ENCODE measurements at regions of chr17 and their contacts with region 1.

Region 1: DNA sequence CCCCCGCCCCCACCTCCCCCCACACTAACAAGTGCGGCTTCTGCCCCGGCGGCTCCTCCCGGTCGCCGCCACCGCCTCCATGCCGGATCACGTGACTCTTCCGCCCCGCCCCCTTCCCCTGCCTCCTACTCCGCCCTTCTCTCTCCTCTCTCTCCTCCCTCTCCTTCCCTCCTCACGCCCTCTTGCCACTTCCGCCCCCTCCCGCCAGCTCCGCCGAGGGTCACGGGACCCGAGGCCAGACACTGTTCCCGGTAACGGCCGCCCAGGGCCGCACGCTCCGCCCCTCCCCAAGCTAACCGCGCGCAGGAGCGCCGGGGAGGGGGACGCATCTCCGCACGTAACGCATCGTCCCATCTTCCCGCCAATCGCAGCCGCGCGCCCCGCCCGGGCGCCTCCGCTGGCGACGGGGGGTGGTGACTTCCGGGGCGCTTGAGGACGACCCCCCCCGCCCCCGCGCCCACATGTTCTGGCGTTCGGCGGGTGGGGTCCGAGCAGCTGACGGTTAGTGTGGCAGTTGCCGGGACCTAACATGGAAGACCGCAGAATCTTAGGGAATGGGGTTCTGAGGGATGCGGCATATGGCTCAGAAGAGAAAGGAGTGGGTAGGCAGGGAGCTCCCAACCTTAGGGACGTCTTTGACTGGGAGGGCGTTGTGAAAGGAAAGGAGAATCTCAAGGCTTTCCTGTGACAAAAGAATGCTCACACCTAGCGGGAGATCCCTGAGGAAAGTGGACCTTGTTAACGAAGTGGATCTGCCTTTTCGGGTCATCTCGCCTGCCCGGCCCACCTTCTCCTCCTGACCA is at the start of gene USP32:
- DNase-seq: peak; percentile 99
- H3K4me3 Mint-ChIP-seq: peak within 1 kb of the TSS; percentile 89
- H3K27ac Mint-ChIP-seq: peak within 1 kb of the TSS; percentile 96
- H3K4me1 Mint-ChIP-seq: peaks cover 44% of the 10 kb centered on the region
- H3K27me3 Mint-ChIP-seq: no peaks in the 10 kb centered on the region
- total RNA-seq, gene USP32: 27.6 to 28.9 TPM

Region 2: GRCh38 chr17:59707114-59707970 is 684.9 kb before region 1 on chr17 and contains the starts of genes PTRH2 and VMP1:
- CTCF ChIA-PET with region 1: no interaction called
- intact Hi-C with region 1: loop called (anchors 10 kb)
- DNase-seq: peak; percentile 97
- H3K4me3 Mint-ChIP-seq: peak within 1 kb of the TSS; percentile 94
- H3K27ac Mint-ChIP-seq: peak within 1 kb of the TSS; percentile 92
- H3K4me1 Mint-ChIP-seq: peaks cover 54% of the 10 kb centered on the region
- H3K27me3 Mint-ChIP-seq: no peaks in the 10 kb centered on the region
- total RNA-seq, gene PTRH2: 19.7 to 24.4 TPM
- total RNA-seq, gene VMP1: 423 to 438 TPM

Region 3: GRCh38 chr17:59892924-59893676 is 499.1 kb before region 1 on chr17 and contains the starts of genes RPS6KB1 and TUBD1:
- CTCF ChIA-PET with region 1: no interaction called
- intact Hi-C with region 1: loop called (anchors 5 kb)
- DNase-seq: peak; percentile 99
- H3K4me3 Mint-ChIP-seq: peak within 1 kb of the TSS; percentile 100
- H3K27ac Mint-ChIP-seq: peak within 1 kb of the TSS; percentile 96
- H3K4me1 Mint-ChIP-seq: peaks cover 58% of the 10 kb centered on the region
- H3K27me3 Mint-ChIP-seq: no peaks in the 10 kb centered on the region
- total RNA-seq, gene RPS6KB1: 42.1 to 48.5 TPM
- total RNA-seq, gene TUBD1: 15.2 to 15.4 TPM

Region 4: DNA sequence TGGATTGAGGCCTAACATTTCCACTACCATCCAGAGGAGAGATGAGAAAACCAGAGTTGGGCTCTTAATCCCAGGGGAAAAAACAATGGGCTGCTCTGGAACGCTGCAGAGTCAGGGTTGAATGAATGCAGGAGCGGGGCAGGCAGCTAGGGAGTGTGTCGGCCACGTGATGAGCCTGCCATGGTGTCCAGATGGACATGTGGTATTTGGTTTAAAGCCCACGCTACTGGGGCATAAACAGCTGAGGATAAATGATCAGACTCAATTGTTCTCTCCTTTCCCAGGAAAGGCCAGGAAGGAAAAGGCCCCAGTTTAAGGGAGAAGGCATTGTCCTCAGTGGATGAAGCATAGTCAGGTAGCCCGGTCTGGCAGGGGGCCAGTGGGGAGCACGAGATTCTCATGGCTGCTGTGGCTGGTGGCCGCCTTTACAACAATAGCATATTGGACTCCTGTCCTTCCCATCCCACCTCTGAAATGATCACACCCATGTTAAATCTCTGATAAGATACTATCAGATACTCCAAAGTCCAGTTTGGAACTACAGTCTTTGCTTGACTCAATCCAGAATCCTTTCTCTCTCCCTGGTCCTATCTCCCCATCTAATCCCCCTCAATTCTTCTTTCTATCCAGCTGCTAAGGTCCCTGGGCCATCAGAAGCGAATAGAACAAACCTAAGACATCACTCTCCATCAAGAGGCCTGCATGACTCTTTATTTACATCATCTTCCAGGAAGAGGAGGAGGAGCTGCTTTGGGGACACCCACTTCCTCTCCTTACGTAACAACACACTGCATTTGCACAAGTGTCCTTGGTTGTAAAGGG is 222.1 kb before region 1 on chr17:
- CTCF ChIA-PET with region 1: no interaction called
- intact Hi-C with region 1: loop called (anchors 2 kb)
- DNase-seq: peak; percentile 63
- H3K4me3 Mint-ChIP-seq: peak overlapping the region; percentile 40
- H3K27ac Mint-ChIP-seq: peak overlapping the region; percentile 80
- H3K4me1 Mint-ChIP-seq: peaks cover 34% of the 10 kb centered on the region
- H3K27me3 Mint-ChIP-seq: peaks cover 3% of the 10 kb centered on the region

Region 5: DNA sequence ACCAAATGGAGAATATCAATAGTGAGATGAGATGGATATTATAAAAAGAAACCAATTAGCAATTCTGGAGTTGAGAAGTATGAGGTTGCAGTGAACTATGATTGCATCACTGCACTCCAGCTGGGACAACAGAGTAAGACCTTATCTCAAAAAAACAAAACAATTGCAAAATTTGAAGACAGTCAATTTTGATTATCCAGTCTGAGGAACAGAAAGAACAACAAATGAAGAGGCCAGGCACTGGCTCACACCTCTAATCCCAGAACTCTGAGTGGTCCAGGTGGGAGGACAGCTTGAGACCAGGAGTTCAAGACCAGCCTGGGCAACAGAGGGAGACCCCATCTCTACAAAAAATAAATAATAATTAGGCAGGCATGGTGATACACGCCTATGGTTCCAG is 35.3 kb before region 1 on chr17:
- CTCF ChIA-PET with region 1: no interaction called
- intact Hi-C with region 1: loop called (anchors 1 kb)
- DNase-seq: peak; percentile 16
- H3K4me3 Mint-ChIP-seq: no peak overlapping the region
- H3K27ac Mint-ChIP-seq: no peak overlapping the region
- H3K4me1 Mint-ChIP-seq: peaks cover 36% of the 10 kb centered on the region
- H3K27me3 Mint-ChIP-seq: no peaks in the 10 kb centered on the region

Region 6: DNA sequence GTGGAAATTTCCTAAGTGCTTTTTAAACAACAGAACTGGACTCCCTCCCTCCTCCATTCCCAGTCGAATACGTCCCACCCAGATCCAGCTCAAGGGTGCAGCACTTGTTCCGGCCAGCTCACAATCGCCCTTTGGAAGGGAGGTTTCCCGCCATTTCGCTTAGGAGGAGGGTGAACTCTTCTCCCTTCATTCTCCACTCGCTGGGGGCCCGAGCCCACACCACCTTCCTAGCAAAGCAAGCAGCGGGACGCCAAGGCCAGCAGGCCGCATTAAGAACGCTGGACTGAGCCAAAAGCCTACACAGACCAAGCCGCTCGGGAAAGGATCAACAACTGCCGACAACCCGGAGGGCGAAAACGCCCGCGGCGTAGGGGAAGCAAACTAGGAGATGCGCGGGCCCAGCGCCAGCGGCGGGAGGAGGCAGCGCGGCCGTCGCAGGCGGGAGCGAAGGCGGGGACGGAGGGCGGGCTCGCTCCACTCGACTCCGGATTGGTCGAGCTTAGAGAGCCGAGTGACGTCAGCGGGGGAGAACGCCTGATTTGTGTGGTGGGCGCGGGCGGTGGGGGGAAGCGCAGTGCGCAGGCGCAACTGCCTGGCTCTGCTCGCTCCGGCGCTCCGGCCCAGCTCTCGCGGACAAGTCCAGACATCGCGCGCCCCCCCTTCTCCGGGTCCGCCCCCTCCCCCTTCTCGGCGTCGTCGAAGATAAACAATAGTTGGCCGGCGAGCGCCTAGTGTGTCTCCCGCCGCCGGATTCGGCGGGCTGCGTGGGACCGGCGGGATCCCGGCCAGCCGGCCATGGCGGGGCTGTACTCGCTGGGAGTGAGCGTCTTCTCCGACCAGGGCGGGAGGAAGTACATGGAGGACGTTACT is 207.6 kb after region 1 on chr17 and contains the start of gene PPM1D:
- CTCF ChIA-PET with region 1: no interaction called
- intact Hi-C with region 1: loop called (anchors 1 kb)
- DNase-seq: peak; percentile 99
- H3K4me3 Mint-ChIP-seq: peak within 1 kb of the TSS; percentile 93
- H3K27ac Mint-ChIP-seq: peak within 1 kb of the TSS; percentile 95
- H3K4me1 Mint-ChIP-seq: peaks cover 30% of the 10 kb centered on the region
- H3K27me3 Mint-ChIP-seq: no peaks in the 10 kb centered on the region
- total RNA-seq, gene PPM1D: 11.8 to 13.1 TPM